ENCODE measurements at regions of chr10 and their contacts with region 1.

Region 1: GRCh38 chr10:32367793-32368453 is 21.0 kb upstream of the EPC1 start:
- DNase-seq: peak; percentile 75
- ATAC-seq: peak; percentile 88
- H3K4me3 ChIP-seq: no peak overlapping the region
- H3K27ac ChIP-seq: no peak overlapping the region
- H3K4me1 ChIP-seq: no peaks in the 10 kb centered on the region; the same call in 1 of the 2 replicates
- H3K27me3 ChIP-seq: no peaks in the 10 kb centered on the region
- CTCF ChIP-seq: peak; percentile 73
- POLR2A ChIP-seq: no peak
- RAD21 ChIP-seq: peak; percentile 73

Region 2: DNA sequence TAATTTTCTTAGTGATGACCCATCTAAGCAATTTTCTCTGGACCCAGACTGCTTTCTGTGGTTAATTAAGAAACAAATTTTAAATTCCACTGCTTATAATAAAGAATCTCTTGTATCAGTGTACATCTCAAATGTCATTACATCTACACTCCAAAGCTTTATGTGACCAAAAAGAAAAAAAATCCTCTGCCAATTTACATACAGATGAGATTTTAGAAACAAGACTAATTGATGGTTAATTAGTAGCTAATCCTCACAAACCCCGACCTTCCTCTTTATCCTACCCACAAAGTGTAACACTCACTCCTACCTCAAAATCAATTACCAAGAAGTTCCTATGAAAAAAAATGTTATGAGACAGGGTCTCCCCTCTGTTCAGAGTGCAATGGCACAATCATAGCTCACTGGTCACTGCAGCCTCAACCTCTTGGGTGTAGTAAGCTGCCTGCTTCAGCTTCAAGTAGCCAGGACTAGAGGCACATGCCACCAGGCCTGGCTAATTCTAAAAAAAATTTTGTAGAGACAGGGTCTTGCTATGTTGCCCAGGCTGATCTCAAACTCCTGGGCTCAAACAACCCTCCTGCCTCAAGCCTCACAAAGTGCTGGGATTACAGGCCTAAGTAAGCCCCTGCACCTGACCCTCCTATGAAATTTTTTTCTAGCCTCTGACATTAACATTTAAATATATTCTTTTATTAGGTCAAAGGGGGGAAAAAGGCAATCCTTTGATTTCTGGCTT is 326.5 kb before region 1 on chr10:
- CTCF ChIA-PET with region 1: no interaction called
- POLR2A ChIA-PET with region 1: no interaction called
- dilution Hi-C with region 1: no loop called
- in situ Hi-C with region 1: no loop called
- intact Hi-C with region 1: no loop called
- DNase-seq: no peak
- ATAC-seq: no peak
- H3K4me3 ChIP-seq: no peak overlapping the region
- H3K27ac ChIP-seq: no peak overlapping the region
- H3K4me1 ChIP-seq: peaks cover 10% of the 10 kb centered on the region; the same call in 1 of the 2 replicates
- H3K27me3 ChIP-seq: no peaks in the 10 kb centered on the region
- CTCF ChIP-seq: no peak
- POLR2A ChIP-seq: no peak
- RAD21 ChIP-seq: no peak

Region 3: DNA sequence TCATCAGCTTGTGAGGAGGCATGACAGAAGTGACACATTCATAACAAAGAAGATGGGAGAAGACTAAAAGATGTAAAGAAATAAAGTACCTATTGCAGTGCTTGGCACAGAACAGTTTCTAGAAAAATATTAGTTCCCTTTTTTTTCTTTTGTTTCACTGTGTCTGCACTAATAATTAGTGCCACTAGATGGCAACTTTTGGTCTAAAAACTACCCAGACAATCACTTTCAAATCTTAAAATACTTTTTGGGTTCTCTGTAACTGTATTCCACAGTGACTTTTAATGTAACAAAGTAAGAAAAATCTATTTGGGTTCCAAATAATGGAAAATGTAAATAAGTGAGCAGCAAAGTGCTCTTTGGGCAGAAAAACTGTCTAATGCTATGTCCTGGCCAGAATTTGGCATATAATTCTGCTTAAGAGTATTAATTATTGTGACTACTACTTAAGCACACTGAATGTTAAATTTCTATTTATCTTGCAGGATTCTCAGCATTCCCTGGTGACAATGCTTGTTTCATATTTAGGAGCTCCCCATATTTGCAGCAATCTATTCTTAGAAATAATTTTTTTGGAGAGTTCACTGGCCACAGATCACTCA is 176.9 kb before region 1 on chr10:
- CTCF ChIA-PET with region 1: no interaction called
- POLR2A ChIA-PET with region 1: no interaction called
- dilution Hi-C with region 1: no loop called
- in situ Hi-C with region 1: no loop called
- intact Hi-C with region 1: loop called (anchors 1 kb)
- DNase-seq: peak; percentile 36
- ATAC-seq: peak; percentile 81
- H3K4me3 ChIP-seq: no peak overlapping the region
- H3K27ac ChIP-seq: no peak overlapping the region
- H3K4me1 ChIP-seq: no peaks in the 10 kb centered on the region
- H3K27me3 ChIP-seq: peaks cover 7% of the 10 kb centered on the region
- CTCF ChIP-seq: peak; percentile 77
- POLR2A ChIP-seq: no peak
- RAD21 ChIP-seq: peak; percentile 61

Region 4: DNA sequence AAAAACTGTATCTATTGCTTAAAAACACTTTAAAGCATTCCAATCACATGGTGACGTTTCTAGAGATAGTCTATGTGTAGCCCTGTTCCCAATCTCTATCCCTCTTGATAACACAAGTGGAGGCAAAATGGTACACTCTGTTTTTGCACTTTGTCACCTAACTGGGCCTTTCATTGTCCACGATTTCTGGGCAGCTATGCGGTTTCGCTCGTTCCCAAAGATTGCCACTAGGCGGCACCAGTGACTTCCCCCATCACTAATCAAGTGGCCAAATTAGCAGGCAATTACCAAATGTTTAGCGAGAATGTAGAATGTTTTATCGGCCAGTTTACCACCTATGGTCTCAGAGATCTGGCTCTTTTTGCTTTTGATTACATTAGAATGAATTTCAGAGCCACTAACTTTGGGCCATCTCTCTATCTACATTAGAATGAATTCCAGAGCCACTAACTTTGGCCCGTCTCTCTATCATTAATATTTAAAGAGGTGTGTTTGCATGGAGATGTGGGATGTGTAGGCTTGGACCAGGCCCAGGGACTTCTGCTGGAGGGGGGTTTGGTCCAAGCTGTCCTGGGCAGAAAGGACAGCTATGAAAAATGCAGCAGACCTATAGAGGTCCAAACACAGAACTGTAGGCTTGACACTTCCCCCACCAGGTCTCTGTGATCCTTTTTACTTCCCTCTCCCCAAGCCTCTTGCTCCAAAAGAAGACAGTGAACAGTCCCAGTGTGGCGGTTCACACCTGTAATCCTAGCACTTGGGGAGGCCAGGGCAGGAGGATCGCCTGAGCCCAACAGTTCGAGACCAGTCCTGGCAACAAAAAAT is 111.1 kb before region 1 on chr10:
- CTCF ChIA-PET with region 1: no interaction called
- POLR2A ChIA-PET with region 1: no interaction called
- dilution Hi-C with region 1: no loop called
- in situ Hi-C with region 1: no loop called
- intact Hi-C with region 1: loop called (anchors 2 kb)
- DNase-seq: peak; percentile 37
- ATAC-seq: peak; percentile 85
- H3K4me3 ChIP-seq: no peak overlapping the region
- H3K27ac ChIP-seq: no peak overlapping the region
- H3K4me1 ChIP-seq: no peaks in the 10 kb centered on the region
- H3K27me3 ChIP-seq: no peaks in the 10 kb centered on the region
- CTCF ChIP-seq: peak; percentile 85
- POLR2A ChIP-seq: no peak
- RAD21 ChIP-seq: peak; percentile 72

Region 5: GRCh38 chr10:32481606-32482005 is 113.7 kb after region 1 on chr10:
- CTCF ChIA-PET with region 1: no interaction called
- POLR2A ChIA-PET with region 1: no interaction called
- dilution Hi-C with region 1: no loop called
- in situ Hi-C with region 1: no loop called
- intact Hi-C with region 1: no loop called
- DNase-seq: no peak
- ATAC-seq: no peak
- H3K4me3 ChIP-seq: no peak overlapping the region
- H3K27ac ChIP-seq: no peak overlapping the region
- H3K4me1 ChIP-seq: no peaks in the 10 kb centered on the region
- H3K27me3 ChIP-seq: no peaks in the 10 kb centered on the region
- CTCF ChIP-seq: no peak
- POLR2A ChIP-seq: no peak
- RAD21 ChIP-seq: no peak